A673 (cell line): ENCODE measurements at regions of chr17 and their contacts with region 1.

Region 1: GRCh38 chr17:73820686-73821448 is 176.6 kb upstream of the SDK2 start:
- DNase-seq: peak; percentile 91
- H3K4me3 ChIP-seq: no peak overlapping the region
- H3K27ac ChIP-seq: no peak overlapping the region
- H3K4me1 ChIP-seq: peaks cover 12% of the 10 kb centered on the region
- H3K27me3 ChIP-seq: no peaks in the 10 kb centered on the region
- CTCF ChIP-seq: peak; percentile 53

Region 2: DNA sequence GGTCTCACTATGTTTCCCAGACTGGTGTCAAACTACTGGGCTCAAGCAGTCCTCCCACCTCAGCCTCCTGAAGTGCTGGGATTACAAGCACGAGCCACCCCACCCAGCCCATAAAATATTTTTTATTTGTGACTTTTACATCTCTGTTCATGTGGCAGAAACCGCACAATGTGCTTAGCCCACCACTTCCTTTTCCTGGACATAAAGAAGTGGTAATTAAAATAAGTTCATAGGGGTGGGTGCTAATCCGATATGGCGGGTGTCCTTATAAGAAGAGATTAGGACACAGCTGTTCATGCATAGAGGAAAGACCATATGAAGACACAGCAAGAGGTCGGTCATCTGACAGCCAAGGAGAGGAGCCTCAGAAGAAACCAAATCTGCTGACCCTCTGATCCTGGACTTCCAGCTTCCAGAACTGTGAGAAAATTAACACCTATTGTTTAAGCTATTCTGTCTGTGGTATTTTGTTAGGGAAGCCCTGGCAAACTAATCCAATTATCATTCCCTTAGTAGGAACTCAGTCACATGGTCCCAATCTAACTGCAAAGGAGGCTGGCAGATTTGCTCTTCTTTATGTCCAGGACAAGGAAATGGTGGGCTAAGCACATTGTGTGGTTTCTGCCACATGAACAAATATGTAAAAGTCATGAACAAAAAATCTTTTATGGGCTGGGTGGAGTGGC is 103.8 kb after region 1 on chr17:
- CTCF ChIA-PET with region 1: no interaction called
- POLR2A ChIA-PET with region 1: no interaction called
- intact Hi-C with region 1: no loop called
- DNase-seq: peak; percentile 65
- H3K4me3 ChIP-seq: no peak overlapping the region
- H3K27ac ChIP-seq: no peak overlapping the region
- H3K4me1 ChIP-seq: peaks cover 5% of the 10 kb centered on the region
- H3K27me3 ChIP-seq: no peaks in the 10 kb centered on the region
- CTCF ChIP-seq: no peak

Region 3: GRCh38 chr17:73956669-73957465 is 136.0 kb after region 1 on chr17:
- CTCF ChIA-PET with region 1: no interaction called
- POLR2A ChIA-PET with region 1: no interaction called
- intact Hi-C with region 1: loop called (anchors 5 kb)
- DNase-seq: peak; percentile 77
- H3K4me3 ChIP-seq: no peak overlapping the region
- H3K27ac ChIP-seq: no peak overlapping the region
- H3K4me1 ChIP-seq: peaks cover 9% of the 10 kb centered on the region
- H3K27me3 ChIP-seq: no peaks in the 10 kb centered on the region
- CTCF ChIP-seq: peak; percentile 76